GM12878 (cell line): ENCODE measurements at regions of chr17 and their contacts with region 1.

Region 1: GRCh38 chr17:36486204-36487194 is at the start of gene ZNHIT3:
- DNase-seq: peak; percentile 80
- ATAC-seq: peak; percentile 97
- H3K4me3 ChIP-seq: peak within 1 kb of the TSS; percentile 90
- H3K27ac ChIP-seq: peak within 1 kb of the TSS; percentile 71
- H3K4me1 ChIP-seq: peaks cover 9% of the 10 kb centered on the region
- H3K27me3 ChIP-seq: peaks cover 0 to 4% of the 10 kb centered on the region in 2 experiments; a peak in 1 of 4 replicates
- CTCF ChIP-seq: no peak
- EP300 ChIP-seq: no peak
- POLR2A ChIP-seq: peak; percentile 91
- RAD21 ChIP-seq: no peak
- polyA plus RNA-seq, gene ZNHIT3: 110 to 128 TPM

Region 2: GRCh38 chr17:35947156-35947585 is 539.3 kb before region 1 on chr17:
- CTCF ChIA-PET with region 1: interaction called, 10 read pairs
- POLR2A ChIA-PET with region 1: no interaction called
- RAD21 ChIA-PET with region 1: interaction called, 4 read pairs
- SMC1A ChIA-PET with region 1: interaction called, 3 read pairs
- in situ Hi-C with region 1: no loop called
- intact Hi-C with region 1: no loop called
- DNase-seq: no peak
- ATAC-seq: peak; percentile 98
- H3K4me3 ChIP-seq: no peak overlapping the region
- H3K27ac ChIP-seq: no peak overlapping the region
- H3K4me1 ChIP-seq: no peaks in the 10 kb centered on the region
- H3K27me3 ChIP-seq: no peaks in the 10 kb centered on the region; a peak in 1 of 4 replicates
- CTCF ChIP-seq: peak; percentile 84 to 97 (median 96)
- EP300 ChIP-seq: no peak
- POLR2A ChIP-seq: no peak
- RAD21 ChIP-seq: peak; percentile 89

Region 3: GRCh38 chr17:35953720-35954119 is 532.8 kb before region 1 on chr17:
- CTCF ChIA-PET with region 1: interaction called, 10 read pairs
- POLR2A ChIA-PET with region 1: no interaction called
- RAD21 ChIA-PET with region 1: no interaction called
- SMC1A ChIA-PET with region 1: no interaction called
- in situ Hi-C with region 1: no loop called
- intact Hi-C with region 1: loop called (anchors 5 kb)
- DNase-seq: no peak
- ATAC-seq: no peak
- H3K4me3 ChIP-seq: no peak overlapping the region
- H3K27ac ChIP-seq: no peak overlapping the region
- H3K4me1 ChIP-seq: no peaks in the 10 kb centered on the region
- H3K27me3 ChIP-seq: no peaks in the 10 kb centered on the region; a peak in 1 of 4 replicates
- CTCF ChIP-seq: no peak
- EP300 ChIP-seq: no peak
- POLR2A ChIP-seq: no peak
- RAD21 ChIP-seq: no peak

Region 4: GRCh38 chr17:36641877-36642845 is 155.7 kb after region 1 on chr17:
- CTCF ChIA-PET with region 1: no interaction called
- POLR2A ChIA-PET with region 1: no interaction called
- RAD21 ChIA-PET with region 1: no interaction called
- SMC1A ChIA-PET with region 1: no interaction called
- in situ Hi-C with region 1: no loop called
- intact Hi-C with region 1: no loop called
- DNase-seq: no peak
- ATAC-seq: no peak
- H3K4me3 ChIP-seq: no peak overlapping the region
- H3K27ac ChIP-seq: no peak overlapping the region
- H3K4me1 ChIP-seq: no peaks in the 10 kb centered on the region
- H3K27me3 ChIP-seq: peaks cover 10 to 18% of the 10 kb centered on the region in 2 experiments
- CTCF ChIP-seq: no peak
- EP300 ChIP-seq: no peak
- POLR2A ChIP-seq: no peak
- RAD21 ChIP-seq: no peak